GM18951 (cell line): ENCODE measurements at regions of chrX and their contacts with region 1.

Region 1: DNA sequence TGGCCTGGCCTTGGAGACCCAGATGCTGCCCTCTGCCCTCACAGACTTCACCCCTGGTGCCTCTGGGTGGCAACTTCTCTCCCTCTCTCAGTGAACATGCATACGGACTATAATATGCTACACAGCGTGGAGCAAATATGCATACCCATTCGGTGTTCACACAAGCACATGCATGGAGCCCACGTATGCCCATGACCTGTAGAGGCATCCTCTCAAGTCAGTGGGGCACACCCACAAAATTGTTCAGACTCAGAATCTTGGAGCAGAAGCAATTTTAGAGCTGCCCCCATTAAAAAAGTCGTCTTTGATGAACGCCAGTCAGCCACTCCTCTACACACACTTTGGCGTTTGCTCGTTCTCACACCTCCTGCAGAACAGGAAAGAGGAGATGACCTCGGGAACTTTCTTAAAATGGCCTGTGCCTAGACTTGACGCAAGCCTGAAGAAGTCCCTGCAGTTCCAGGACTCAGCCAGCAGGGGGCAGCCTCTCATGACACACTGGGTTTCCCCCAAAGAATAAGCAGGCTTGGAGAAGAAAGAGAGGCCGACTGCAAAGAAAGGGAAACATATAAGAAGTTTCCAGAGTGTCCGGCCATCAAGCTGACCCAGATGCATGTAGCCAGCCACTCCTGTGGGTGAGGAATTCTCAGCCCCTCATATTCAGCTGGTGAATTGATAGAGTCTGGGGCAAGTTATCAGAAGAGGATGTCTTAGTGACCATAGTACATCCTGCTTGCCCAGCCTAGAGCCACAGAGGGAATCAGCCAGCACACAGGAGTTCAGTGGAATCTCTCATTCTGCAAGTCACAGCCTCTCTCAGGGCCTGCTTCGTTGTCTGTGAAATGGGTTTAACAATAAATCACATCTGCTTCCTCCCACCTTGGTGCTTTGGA is 17.3 kb downstream of the APLN start:
- POLR2A ChIP-seq: no peak

Region 2: DNA sequence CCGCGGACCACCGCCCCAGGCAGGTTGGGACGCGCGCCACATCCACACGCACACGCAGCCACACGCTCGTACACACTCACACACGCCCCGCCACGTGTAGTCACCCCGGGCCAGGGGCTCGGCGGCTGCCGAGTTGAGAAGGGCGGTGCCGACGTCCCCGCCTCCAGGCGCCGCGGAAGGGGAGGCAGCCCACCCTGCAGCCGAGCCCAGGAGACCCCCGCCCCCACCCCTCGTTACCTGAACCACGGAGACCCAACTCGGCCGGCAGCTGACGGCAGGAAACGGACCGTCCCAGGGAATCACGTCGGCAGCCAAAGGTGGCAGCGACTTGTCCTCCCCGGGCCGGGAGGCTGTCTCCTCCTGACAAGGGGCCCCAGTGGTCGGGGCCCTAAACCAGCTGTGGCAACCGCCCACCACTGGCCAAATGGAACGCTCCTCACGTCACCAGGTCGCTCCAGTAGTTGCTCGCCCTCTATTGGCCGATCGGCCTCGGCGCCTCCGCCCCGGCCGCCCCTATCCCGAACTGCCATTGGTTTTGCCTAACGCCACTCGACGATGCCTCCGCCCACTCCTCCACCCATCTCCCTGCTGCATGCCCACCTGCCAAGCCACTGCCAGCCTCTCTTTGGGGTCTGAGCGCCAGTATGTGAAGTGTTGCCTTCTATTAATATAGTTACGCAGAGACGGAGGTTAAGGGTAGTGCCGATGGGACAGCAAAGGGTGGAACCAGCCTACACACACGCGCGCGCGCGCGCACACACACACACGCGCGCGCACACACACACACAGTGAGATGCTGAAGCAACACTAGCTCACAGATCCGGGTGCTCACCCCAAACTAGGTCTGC is 206.2 kb after region 1 on chrX and contains the start of gene ZDHHC9:
- in situ Hi-C with region 1: loop called (anchors 25 kb)
- POLR2A ChIP-seq: peak; percentile 40